Activated CD4-positive, alpha-beta T cell treated with anti-CD3 and anti-CD28 coated beads, Interleukin-2, amount 10 ng/mL, durations not matched to agents 7 days and 5 days (primary cell): ENCODE measurements at regions of chr2 and their contacts with region 1.

Region 1: DNA sequence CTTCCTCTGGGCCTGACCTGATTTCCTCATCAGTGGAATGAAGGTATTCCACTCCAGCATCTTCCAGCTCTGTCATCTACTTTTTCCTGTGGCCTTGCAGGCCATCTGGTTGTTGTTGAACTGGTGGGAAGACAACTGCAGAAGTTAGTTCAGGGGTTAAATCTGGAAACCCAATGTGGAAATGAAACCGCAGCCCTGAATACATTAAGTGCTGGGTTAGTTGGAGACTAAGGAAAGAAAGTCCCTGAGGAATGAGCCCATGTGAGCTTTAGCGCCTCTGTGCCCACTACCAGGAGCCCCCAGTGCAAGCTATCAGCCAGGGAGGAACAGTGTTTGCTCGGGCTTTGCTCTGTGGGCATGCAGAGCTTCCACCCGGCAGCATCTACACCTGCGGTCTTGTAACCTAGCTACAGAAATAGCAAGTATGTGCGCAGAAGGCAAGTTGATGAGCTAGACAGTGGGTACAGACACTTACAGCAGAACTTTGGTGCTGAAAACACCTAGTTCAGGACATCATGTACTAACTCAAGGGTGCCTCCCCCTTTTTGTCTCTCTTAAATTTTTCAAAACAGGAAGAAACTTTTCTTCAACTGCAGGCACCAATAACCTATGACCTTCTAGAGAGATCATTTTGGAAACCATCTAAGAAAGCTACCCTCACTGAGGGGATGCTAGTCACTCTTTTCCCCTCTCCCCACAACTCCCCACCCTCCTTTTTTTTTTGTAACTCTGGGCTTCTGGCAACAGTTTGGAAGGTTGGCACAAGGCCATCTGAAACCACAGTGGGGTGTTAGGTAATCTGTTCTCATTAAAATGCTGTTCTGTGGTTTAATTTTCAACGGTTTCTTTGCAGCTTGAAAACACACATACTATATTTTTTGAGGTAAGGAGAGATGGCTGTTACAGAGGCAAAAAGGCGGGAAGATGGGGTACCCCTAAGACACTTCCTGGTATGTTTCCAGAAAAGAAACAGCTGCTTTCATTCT is 18.3 kb upstream of the CXCR4 start:
- DNase-seq: peak; percentile 85
- H3K4me3 Mint-ChIP-seq: peak overlapping the region; percentile 50
- H3K27ac Mint-ChIP-seq: peak overlapping the region; percentile 95
- H3K4me1 Mint-ChIP-seq: peaks cover 91% of the 10 kb centered on the region
- H3K27me3 Mint-ChIP-seq: peaks cover 15% of the 10 kb centered on the region

Region 2: GRCh38 chr2:135839713-135840112 is 296.5 kb before region 1 on chr2:
- CTCF ChIA-PET with region 1: no interaction called
- POLR2A ChIA-PET with region 1: no interaction called
- DNase-seq: no peak
- H3K4me3 Mint-ChIP-seq: no peak overlapping the region
- H3K27ac Mint-ChIP-seq: no peak overlapping the region
- H3K4me1 Mint-ChIP-seq: peaks cover 42% of the 10 kb centered on the region
- H3K27me3 Mint-ChIP-seq: no peaks in the 10 kb centered on the region

Region 3: GRCh38 chr2:136117909-136118818 is 18.1 kb before region 1 on chr2 and contains the start of gene CXCR4:
- CTCF ChIA-PET with region 1: no interaction called
- POLR2A ChIA-PET with region 1: no interaction called
- DNase-seq: peak; percentile 86
- H3K4me3 Mint-ChIP-seq: peak within 1 kb of the TSS; percentile 98
- H3K27ac Mint-ChIP-seq: peak within 1 kb of the TSS; percentile 98
- H3K4me1 Mint-ChIP-seq: peaks cover 57% of the 10 kb centered on the region
- H3K27me3 Mint-ChIP-seq: peaks cover 23% of the 10 kb centered on the region
- total RNA-seq, gene CXCR4: 147 to 169 TPM

Region 4: DNA sequence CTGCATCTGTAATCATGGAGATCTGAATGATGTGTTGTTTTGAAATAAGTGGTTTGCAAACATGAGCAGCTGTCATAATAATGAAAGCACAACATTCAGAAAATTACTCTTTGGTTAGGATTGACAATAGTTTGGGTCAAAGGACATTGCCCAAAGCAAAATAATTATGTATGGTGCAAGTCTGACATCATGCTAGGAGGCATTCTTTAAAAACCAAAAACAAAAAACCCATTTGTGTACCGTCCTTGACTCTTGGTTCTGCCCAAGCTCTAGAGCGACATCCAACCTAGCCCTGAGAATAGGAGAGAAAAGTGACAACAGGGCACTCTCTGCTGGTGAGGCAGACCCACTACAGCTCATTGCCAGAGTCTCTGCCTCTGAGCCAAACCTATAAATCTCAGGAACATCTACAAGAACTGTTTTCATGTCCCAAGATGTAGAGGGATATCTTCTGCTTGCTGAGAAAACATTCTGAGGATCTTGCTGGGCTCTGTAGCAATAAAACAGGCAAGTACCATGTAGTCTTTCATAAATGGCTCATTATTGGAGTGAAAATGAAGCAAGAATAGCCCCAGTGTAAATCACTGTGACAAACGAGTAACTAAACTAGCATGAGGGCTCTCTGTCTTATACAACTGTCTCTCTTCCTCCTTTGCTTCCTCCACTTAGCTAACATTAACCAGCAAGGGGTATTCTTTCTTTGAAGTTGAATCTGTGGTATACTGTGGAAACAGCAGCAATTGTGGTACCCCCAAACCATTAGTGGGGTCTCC is 248.5 kb after region 1 on chr2:
- CTCF ChIA-PET with region 1: interaction called, 10 read pairs
- POLR2A ChIA-PET with region 1: no interaction called
- DNase-seq: peak; percentile 64
- H3K4me3 Mint-ChIP-seq: no peak overlapping the region
- H3K27ac Mint-ChIP-seq: peak overlapping the region; percentile 46
- H3K4me1 Mint-ChIP-seq: peaks cover 44% of the 10 kb centered on the region
- H3K27me3 Mint-ChIP-seq: no peaks in the 10 kb centered on the region

Region 5: DNA sequence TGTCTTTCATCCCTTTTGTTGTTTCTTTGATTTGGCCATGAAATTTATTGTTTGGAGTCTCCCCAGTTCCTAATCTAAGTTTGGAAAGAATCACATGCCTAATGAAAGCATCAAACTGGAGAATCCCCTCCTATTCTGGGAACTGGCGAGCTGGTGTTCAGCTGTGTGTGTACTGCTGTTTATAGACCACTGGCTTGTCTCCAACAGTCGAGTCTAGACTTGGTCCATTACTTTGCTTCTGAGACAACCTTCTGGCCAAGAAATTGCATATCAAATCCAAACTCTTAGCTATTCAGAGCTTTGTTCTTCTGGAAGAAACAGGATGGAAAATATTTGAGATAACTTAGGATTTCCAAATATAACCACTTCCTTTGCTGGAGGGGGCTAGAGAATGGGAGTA is 517.6 kb after region 1 on chr2:
- CTCF ChIA-PET with region 1: no interaction called
- POLR2A ChIA-PET with region 1: no interaction called
- DNase-seq: no peak
- H3K4me3 Mint-ChIP-seq: no peak overlapping the region
- H3K27ac Mint-ChIP-seq: no peak overlapping the region
- H3K4me1 Mint-ChIP-seq: no peaks in the 10 kb centered on the region
- H3K27me3 Mint-ChIP-seq: peaks cover 5% of the 10 kb centered on the region